Astrocyte of the cerebellum (primary cell): ENCODE measurements at regions of chr1 and their contacts with region 1.

Region 1: GRCh38 chr1:8323706-8324105 is 5.8 kb downstream of the SLC45A1 start:
- DNase-seq: no peak
- H3K4me3 ChIP-seq: no peak overlapping the region
- CTCF ChIP-seq: no peak

Region 2: DNA sequence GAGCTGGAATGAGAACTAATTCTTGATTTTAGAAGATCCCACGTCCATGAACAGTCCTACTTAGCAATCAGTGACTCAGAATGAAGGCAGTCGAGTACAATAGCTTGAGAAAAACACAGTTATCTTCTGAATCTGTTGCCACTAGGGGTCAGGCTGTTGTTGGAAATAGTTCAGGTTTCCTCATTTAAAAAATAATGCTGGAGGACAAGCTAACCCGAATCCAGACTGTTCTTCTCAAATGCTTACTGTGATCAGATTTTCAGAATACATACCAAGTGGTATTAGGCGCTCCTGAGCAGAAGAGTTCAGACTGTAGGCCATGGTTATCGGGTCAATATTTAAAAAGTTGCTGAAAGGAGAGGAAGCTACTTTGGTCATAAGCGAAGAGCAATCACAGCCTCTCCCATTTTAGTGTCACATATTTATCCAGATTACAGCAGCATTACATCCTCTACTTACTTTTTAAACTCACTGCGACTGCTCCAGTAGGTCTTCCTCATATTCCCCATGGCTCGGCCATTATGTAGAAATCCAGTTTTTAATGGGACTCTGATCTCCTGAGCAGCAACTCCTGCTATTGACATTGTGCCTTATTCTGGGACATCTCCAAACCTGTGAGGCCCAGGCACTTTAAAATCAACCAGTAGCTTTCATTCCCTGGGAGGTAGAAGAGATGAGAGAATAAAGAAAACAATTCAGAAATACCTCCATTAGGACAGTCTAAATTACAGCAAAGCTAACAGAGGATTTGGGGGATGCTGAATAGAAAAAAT is 308.5 kb before region 1 on chr1:
- in situ Hi-C with region 1: loop called (anchors 5 kb)
- DNase-seq: peak; percentile 74
- H3K4me3 ChIP-seq: peak overlapping the region; percentile 0
- CTCF ChIP-seq: peak; percentile 48

Region 3: DNA sequence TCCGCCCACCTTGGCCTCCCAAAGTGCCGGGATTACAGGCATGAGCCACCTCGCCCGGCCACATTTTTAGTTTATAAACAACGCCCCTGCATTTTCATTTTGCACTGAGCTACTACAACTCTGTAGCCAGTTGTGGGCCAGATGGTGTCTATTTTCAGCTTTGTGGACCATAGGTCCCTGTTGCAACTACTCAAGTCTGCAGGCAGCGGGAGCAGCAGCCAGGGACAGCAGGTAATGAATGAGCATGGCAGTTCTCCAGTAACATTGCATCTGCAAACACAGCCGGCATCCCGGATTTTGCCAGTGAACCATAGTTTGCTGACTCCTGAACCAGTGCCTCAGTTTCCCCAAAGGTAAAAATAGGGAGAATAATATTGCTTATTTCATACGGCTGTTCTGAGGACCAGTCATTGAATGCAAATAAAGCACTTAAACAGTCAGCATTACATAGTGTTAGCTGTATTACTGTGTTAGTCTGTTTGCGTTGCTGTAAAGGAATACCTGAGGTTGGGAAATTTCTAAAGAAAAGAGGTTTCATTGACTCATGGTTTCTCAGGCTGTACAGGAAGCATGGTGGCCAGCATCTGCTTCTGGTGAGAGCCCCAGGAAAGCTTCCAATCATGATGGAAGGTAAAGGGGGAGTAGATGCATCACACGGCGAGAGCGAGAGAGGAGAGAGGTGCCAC is 71.3 kb before region 1 on chr1:
- in situ Hi-C with region 1: no loop called
- DNase-seq: no peak
- H3K4me3 ChIP-seq: no peak overlapping the region
- CTCF ChIP-seq: no peak

Region 4: GRCh38 chr1:8424539-8425116 is 100.9 kb after region 1 on chr1:
- in situ Hi-C with region 1: loop called (anchors 5 kb)
- DNase-seq: no peak
- H3K4me3 ChIP-seq: peak overlapping the region; percentile 72
- CTCF ChIP-seq: no peak